Head of caudate nucleus (tissue), 42 donors: ENCODE measurements at regions of chr12 and their contacts with region 1.

Region 1: DNA sequence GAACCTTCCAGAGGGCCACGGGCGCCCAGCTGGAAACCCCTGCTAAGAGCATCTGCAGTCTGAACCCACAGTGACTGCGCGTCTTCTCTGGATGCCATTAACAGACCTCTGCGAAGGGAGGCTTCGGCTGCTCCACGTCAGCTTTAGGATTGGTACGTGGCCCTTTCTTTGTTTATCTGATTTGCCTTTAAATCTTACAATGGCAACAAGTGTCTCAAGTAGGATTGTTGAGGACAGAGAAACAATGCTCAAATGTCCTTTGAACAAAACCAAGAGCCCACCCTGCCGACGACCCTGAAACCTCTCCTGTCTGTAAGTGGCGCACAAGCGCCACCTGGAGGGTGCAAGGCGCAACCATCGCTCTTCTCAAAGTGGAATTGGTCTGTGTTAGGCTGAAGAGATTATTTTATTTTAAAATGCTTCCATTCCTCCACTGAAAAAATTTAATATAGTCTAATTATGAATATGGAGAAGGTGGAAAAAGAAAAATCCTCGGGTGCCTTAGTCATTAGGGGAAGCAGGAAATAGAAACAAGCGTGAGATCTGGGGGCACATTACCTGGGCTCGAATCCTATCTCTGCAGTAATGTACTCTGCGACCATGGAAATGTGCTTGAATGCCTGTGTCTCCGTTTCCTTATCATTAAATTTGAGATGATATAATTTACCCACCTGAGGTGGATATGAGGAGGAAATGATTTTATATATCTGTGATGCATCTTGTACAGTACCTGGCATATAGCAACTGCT is 82.6 kb upstream of the PTPRB start:
- DNase-seq: peak; percentile 36 to 86 (median 66)

Region 2: GRCh38 chr12:69738351-69739286 is 981.2 kb before region 1 on chr12 and contains the start of gene RAB3IP:
- intact Hi-C with region 1: loop called (anchors 10 kb)
- DNase-seq: peak; percentile 58 to 96 (median 92)

Region 3: DNA sequence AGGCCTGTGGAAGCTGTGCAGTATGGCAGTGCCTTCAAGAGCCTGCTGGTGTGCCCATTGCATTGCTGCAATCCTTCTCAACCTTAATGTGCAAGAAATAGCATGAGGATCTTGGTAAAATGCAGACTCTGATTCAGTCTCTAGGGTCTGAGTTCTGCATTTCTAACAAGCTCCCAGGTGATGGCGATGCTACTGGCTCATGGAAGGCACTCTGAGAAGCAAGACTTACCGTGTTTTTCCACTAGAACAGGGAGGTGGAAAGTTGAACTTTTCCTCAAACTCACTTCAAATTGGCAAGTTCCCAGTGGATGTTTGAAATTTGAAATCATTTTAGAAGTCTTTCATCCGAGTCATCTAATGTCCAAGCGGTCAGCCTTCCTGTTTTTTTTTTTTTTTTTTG is 839.3 kb before region 1 on chr12:
- intact Hi-C with region 1: loop called (anchors 5 kb)
- DNase-seq: no peak

Region 4: GRCh38 chr12:70543444-70543843 is 176.4 kb before region 1 on chr12:
- intact Hi-C with region 1: no loop called
- DNase-seq: no peak

Region 5: GRCh38 chr12:70590051-70590450 is 129.8 kb before region 1 on chr12:
- intact Hi-C with region 1: loop called (anchors 2 kb)
- DNase-seq: peak; percentile 45 to 93 (median 82)